B cell (primary cell): ENCODE measurements at regions of chr1 and their contacts with region 1.

Region 1: DNA sequence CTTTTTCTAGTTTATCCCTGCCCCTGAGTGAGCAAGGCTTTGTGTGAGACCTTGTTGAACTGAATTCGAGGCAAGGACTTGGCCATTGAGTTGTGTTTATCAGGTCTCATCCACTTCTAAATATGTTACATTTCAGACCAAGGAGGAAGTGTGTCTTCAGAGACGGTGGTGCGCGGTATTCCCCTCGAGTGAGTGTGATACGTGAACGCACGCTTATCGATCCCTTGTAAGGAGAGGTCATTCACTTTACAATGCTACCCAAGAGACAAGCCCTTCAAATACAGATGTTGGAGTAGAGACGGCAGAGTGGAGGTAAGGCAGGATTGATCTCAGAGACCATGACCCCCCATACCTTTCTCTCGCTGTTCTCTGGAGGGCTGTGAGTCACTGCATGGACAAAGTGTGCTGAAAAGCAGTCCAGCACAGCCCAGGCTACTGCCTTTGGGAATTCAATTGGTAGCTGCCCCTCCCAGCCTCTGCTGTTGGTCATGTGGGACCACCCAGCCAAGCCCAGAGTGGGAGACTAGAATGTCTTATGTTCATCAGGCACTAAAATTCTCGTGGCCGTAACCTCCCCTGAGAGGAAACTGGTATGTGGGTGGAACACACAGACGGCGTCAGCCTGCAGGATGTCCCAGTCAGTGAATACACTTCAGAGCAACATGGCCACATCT is 16.3 kb upstream of the MTARC1 start:
- DNase-seq: peak; percentile 80
- ATAC-seq: peak; percentile 87
- H3K4me3 ChIP-seq: peak overlapping the region in 4 of 5 experiments; percentile 43 to 78 (median 55)
- H3K4me3 Mint-ChIP-seq: peak overlapping the region; percentile 89
- H3K27ac ChIP-seq: peak overlapping the region; percentile 99 to 100
- H3K27ac Mint-ChIP-seq: peak overlapping the region; percentile 99
- H3K4me1 ChIP-seq: peaks cover 21% of the 10 kb centered on the region in 2 donors
- H3K4me1 Mint-ChIP-seq: peaks cover 42% of the 10 kb centered on the region
- H3K27me3 ChIP-seq: no peaks in the 10 kb centered on the region
- H3K27me3 Mint-ChIP-seq: no peaks in the 10 kb centered on the region
- CTCF ChIP-seq: no peak

Region 2: DNA sequence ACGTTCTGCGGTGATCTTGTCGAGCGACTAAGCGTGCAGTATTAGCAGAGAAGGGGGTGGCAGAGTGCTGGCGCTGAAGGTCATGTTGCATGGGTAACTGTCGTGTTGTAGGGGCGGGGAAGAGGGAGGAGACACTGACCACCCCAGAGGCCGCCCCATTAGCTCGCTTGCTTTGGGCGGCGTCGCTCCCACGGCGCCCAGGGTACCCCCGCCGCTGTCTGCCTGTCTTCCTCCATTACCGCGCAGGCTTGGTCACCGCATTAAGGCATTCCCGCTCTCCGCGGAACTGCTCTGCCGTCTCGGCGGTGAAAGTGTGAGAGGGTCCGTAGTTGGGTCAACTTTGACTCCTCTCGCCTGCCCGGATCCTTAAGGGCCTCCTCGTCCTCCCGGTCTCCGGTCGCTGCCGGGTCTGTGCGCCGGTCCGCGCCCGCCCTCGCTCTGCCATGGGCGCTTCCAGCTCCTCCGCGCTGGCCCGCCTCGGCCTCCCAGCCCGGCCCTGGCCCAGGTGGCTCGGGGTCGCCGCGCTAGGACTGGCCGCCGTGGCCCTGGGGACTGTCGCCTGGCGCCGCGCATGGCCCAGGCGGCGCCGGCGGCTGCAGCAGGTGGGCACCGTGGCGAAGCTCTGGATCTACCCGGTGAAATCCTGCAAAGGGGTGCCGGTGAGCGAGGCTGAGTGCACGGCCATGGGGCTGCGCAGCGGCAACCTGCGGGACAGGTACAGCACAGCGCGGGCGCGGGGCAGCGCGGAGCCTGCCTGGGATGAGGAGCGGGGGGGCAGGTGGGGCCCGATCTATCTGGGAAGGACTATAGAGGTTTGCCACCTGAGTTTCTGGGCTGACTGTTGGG is 22.1 kb before region 1 on chr1 and contains the start of gene MTARC2:
- CTCF ChIA-PET with region 1: interaction called, 25 read pairs
- POLR2A ChIA-PET with region 1: interaction called, 9 read pairs
- intact Hi-C with region 1: loop called (anchors 1 kb)
- DNase-seq: peak; percentile 52
- ATAC-seq: peak; percentile 93
- H3K4me3 ChIP-seq: peak within 1 kb of the TSS in 4 of 5 experiments; percentile 42 to 65 (median 58)
- H3K4me3 Mint-ChIP-seq: peak within 1 kb of the TSS; percentile 92
- H3K27ac ChIP-seq: no peak within 1 kb of the TSS
- H3K27ac Mint-ChIP-seq: peak within 1 kb of the TSS; percentile 59
- H3K4me1 ChIP-seq: peaks cover 16 to 20% of the 10 kb centered on the region in 2 donors
- H3K4me1 Mint-ChIP-seq: peaks cover 24% of the 10 kb centered on the region
- H3K27me3 ChIP-seq: peaks cover 0 to 36% (median 11%) of the 10 kb centered on the region in 4 experiments
- H3K27me3 Mint-ChIP-seq: peaks cover 40% of the 10 kb centered on the region
- CTCF ChIP-seq: no peak
- total RNA-seq, gene MTARC2: 17.2 and 22.6 TPM in 2 replicates

Region 3: DNA sequence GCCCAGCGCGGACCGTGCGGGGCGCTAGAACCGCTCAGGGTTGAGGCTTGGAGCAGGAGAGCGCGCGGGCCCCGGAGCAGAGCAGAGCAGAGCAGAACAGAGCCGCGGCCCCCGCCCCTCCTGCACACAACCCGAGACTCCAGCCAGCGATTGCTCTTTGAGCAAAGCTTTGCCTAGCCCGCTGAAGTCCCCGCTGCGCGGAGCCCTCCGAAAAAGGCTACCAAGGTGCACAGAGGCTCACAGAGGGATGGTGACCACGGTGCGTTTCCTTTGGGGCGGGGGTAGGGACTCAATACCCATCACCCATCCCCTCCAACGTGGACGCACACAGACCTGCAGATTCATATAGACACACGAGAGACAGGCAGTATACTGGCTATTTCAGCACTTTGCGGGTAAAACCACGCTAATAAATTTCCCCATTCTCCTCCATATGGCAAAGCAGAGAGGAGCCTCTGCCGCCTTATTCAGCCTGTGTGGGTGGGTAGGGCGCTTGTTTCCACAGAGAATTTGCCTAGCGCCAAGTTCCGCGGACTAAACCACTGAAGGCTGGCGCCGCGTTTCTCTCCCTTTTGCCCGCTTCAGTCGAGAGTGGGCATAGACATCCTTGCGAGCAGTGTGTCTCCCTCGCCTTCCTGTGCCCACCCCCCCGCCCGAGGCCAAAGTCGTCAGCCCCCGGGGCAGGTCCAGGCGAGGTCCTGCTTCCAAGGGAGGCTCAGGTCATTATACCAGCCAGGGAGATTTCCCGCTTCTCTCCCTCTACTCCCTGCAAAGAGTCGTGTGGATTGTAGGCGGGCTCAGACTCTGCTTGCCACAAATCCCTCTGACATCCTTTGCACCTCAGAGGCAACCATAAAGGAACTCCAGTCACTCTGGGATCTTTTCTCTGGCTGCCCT is 117.4 kb after region 1 on chr1:
- CTCF ChIA-PET with region 1: no interaction called
- POLR2A ChIA-PET with region 1: no interaction called
- intact Hi-C with region 1: no loop called
- DNase-seq: peak; percentile 41
- ATAC-seq: peak; percentile 67
- H3K4me3 ChIP-seq: peak overlapping the region in 4 of 5 experiments; percentile 26 to 39 (median 35)
- H3K4me3 Mint-ChIP-seq: peak overlapping the region; percentile 79
- H3K27ac ChIP-seq: no peak overlapping the region
- H3K27ac Mint-ChIP-seq: no peak overlapping the region
- H3K4me1 ChIP-seq: peaks cover 37 to 39% of the 10 kb centered on the region in 2 donors
- H3K4me1 Mint-ChIP-seq: peaks cover 34% of the 10 kb centered on the region
- H3K27me3 ChIP-seq: peaks cover 0 to 76% (median 54%) of the 10 kb centered on the region in 4 experiments
- H3K27me3 Mint-ChIP-seq: peaks cover 63% of the 10 kb centered on the region
- CTCF ChIP-seq: no peak